Common myeloid progenitor, CD34-positive (primary cell): ENCODE measurements at regions of chr18 and their contacts with region 1.

Region 1: GRCh38 chr18:59249205-59249774 is 24.0 kb downstream of the RAX start:
- DNase-seq: peak; percentile 66 to 80 (median 73)
- H3K4me3 ChIP-seq: no peak overlapping the region
- H3K27ac ChIP-seq: no peak overlapping the region
- H3K4me1 ChIP-seq: no peaks in the 10 kb centered on the region
- H3K27me3 ChIP-seq: peaks cover 9 to 30% (median 17%) of the 10 kb centered on the region in 5 experiments

Region 2: GRCh38 chr18:59220784-59221765 is 28.2 kb before region 1 on chr18:
- CTCF ChIA-PET with region 1: no interaction called
- POLR2A ChIA-PET with region 1: no interaction called
- DNase-seq: peak; percentile 9 to 49 (median 43)
- H3K4me3 ChIP-seq: peak overlapping the region in 2 of 7 experiments; percentile 43 to 57
- H3K27ac ChIP-seq: no peak overlapping the region
- H3K4me1 ChIP-seq: peaks cover 0 to 17% (median 7%) of the 10 kb centered on the region in 4 experiments
- H3K27me3 ChIP-seq: peaks cover 19 to 86% (median 39%) of the 10 kb centered on the region in 5 experiments

Region 3: DNA sequence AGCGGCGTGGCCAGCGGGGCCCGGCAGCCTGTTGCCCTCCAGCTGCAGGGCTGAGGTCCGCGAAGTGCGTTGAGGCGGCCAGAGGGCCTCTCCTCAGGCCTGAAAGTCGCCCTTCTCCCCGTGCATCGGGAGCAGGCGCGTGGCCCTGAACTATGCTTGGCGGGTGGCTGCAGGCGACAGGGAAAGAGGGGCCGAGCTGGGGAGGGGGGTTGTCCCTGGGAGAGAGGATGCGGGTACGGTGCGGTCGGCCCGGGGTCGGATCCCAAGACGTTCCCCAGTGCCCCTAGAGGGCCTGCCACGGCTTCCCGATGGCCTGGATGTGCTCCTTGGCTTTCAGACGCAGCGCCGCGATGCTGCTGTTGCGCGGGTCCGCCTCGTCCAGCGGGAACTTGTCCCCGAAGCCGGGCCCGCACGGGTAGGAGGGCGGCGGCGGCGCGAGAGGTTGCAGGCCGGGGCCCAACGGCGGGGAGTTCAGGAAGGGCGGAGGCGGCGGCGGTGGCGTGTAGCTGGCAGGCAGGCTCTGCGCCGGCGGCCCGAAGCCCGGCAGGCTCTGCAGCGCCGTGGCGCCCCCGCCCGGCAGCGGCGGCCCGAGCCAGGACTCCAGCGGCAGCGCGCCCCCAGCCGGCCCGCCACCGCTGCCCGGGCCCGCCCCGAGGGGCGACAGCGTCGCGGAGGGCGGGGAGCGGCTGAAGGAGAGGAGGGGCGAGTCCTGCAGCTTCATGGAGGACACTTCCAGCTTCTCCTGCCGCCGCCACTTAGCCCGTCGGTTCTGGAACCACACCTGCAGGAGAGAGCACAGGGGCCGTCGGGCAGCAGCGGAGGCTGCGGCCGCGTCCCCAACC is 19.7 kb after region 1 on chr18:
- CTCF ChIA-PET with region 1: interaction called, 27 read pairs
- POLR2A ChIA-PET with region 1: no interaction called
- DNase-seq: peak; percentile 63 to 79 (median 69)
- H3K4me3 ChIP-seq: peak overlapping the region in 5 of 7 experiments; percentile 1 to 55 (median 37)
- H3K27ac ChIP-seq: no peak overlapping the region
- H3K4me1 ChIP-seq: peaks cover 0 to 48% (median 26%) of the 10 kb centered on the region in 4 experiments
- H3K27me3 ChIP-seq: peaks cover 16 to 100% (median 71%) of the 10 kb centered on the region in 5 experiments

Region 4: GRCh38 chr18:59308248-59308937 is 59.1 kb after region 1 on chr18:
- CTCF ChIA-PET with region 1: interaction called, 14 read pairs
- POLR2A ChIA-PET with region 1: no interaction called
- DNase-seq: peak; percentile 42 to 82 (median 73)
- H3K4me3 ChIP-seq: peak overlapping the region in 3 of 7 experiments; percentile 35 to 70 (median 56)
- H3K27ac ChIP-seq: no peak overlapping the region
- H3K4me1 ChIP-seq: peaks cover 0 to 9% (median 5%) of the 10 kb centered on the region in 4 experiments
- H3K27me3 ChIP-seq: peaks cover 8 to 49% (median 23%) of the 10 kb centered on the region in 5 experiments